ENCODE measurements at regions of chr5 and their contacts with region 1.

Region 1: DNA sequence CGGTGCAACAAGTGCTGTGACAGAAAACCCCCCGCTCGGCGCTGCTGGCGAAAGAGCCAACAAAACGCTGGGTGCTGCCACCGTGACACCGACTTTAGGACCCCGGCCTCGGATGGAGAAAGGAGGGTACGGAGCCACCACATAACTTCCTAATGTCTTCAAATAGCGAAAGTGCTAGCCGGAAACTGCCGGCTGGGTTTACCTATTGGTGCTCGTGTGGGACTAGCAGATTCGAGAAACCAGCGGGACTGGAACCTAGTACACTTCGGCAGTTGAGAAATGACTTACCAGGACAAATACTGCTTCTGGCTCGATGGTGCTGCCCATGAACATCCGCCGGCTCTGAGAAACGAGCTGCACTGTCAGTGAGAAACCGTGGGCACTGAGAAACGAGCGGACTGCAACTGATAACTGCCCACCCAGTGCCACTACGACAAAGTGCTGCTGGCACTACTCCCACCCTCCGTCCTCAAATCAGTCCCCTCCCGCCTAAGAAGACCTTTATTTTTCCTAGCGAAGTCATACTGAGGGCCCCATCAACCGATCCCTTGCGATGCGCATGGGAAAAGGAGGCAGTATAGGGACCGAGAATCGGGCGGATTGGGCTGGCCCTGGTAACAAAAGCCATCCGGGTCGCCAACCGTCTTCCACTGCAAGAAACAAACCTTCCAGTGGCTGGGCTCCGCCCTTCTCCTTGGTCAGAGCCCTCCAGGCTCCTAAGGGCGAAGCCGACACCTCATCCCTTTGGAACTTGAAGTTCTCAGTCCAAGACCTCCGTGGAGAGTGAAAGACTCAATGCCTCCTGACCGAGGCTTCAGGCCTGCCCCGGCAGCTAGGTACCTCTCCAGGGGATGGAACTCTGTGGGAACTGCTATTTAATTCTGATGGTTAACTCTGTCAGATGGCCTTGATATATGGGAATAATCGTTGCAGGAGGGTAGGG is 27.0 kb upstream of the ANXA2R start:
- H3K4me3 Mint-ChIP-seq: peak overlapping the region; percentile 100
- H3K27ac Mint-ChIP-seq: peak overlapping the region; percentile 99
- H3K4me1 Mint-ChIP-seq: peaks cover 49% of the 10 kb centered on the region
- H3K27me3 Mint-ChIP-seq: no peaks in the 10 kb centered on the region

Region 2: GRCh38 chr5:41903892-41904799 is 1162.9 kb before region 1 on chr5 and contains the start of gene RIMOC1:
- intact Hi-C with region 1: loop called (anchors 5 kb)
- H3K4me3 Mint-ChIP-seq: peak within 1 kb of the TSS; percentile 95
- H3K27ac Mint-ChIP-seq: peak within 1 kb of the TSS; percentile 99
- H3K4me1 Mint-ChIP-seq: peaks cover 45% of the 10 kb centered on the region
- H3K27me3 Mint-ChIP-seq: peaks cover 9% of the 10 kb centered on the region

Region 3: GRCh38 chr5:42950440-42951292 is 116.4 kb before region 1 on chr5:
- intact Hi-C with region 1: loop called (anchors 1 kb)
- H3K4me3 Mint-ChIP-seq: peak overlapping the region; percentile 83
- H3K27ac Mint-ChIP-seq: peak overlapping the region; percentile 98
- H3K4me1 Mint-ChIP-seq: peaks cover 35% of the 10 kb centered on the region
- H3K27me3 Mint-ChIP-seq: peaks cover 10% of the 10 kb centered on the region

Region 4: GRCh38 chr5:43008369-43009153 is 58.5 kb before region 1 on chr5:
- intact Hi-C with region 1: loop called (anchors 2 kb)
- H3K4me3 Mint-ChIP-seq: peak overlapping the region; percentile 82
- H3K27ac Mint-ChIP-seq: peak overlapping the region; percentile 98
- H3K4me1 Mint-ChIP-seq: peaks cover 39% of the 10 kb centered on the region
- H3K27me3 Mint-ChIP-seq: no peaks in the 10 kb centered on the region

Region 5: DNA sequence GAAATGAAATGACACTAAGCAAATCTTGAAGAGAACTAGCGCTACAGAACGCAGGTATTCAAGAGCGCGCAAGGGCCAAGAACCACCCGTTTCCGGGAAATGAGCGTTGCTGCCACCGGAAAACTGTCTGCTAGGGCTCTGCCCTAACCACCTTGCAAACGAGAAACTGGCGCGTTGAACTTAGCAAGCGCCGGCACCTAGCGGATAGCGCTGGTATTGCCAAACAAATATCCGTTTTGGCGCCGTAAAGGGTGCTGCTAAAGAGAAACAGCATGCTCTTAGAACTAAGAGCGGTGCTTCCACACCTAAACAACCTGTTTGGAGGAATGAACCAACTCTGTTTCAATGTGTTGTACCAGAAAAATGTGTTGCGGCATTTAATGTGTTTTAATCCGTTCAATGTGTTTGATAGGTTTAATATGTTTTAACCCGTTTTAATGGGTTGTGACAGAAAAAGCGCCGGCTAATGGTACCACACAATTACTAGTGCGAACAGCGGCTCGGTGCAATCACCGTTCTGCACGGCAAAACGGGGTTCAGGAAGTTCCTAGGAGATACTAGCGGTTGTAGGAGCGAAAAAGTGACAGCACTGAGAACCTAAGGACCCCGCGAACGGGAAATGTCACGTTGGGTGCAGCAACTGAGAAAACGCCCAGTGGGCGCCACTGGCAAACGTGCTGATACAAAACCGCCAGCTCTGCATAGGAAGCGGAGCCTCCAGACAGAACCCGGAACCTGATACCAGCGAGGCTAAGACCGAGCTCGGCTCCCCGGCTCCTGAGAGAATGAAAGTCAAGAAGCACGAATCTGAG is 26.6 kb before region 1 on chr5 and contains the start of gene ANXA2R:
- intact Hi-C with region 1: loop called (anchors 1 kb)
- H3K4me3 Mint-ChIP-seq: peak within 1 kb of the TSS; percentile 88
- H3K27ac Mint-ChIP-seq: peak within 1 kb of the TSS; percentile 100
- H3K4me1 Mint-ChIP-seq: peaks cover 43% of the 10 kb centered on the region
- H3K27me3 Mint-ChIP-seq: no peaks in the 10 kb centered on the region

Region 6: DNA sequence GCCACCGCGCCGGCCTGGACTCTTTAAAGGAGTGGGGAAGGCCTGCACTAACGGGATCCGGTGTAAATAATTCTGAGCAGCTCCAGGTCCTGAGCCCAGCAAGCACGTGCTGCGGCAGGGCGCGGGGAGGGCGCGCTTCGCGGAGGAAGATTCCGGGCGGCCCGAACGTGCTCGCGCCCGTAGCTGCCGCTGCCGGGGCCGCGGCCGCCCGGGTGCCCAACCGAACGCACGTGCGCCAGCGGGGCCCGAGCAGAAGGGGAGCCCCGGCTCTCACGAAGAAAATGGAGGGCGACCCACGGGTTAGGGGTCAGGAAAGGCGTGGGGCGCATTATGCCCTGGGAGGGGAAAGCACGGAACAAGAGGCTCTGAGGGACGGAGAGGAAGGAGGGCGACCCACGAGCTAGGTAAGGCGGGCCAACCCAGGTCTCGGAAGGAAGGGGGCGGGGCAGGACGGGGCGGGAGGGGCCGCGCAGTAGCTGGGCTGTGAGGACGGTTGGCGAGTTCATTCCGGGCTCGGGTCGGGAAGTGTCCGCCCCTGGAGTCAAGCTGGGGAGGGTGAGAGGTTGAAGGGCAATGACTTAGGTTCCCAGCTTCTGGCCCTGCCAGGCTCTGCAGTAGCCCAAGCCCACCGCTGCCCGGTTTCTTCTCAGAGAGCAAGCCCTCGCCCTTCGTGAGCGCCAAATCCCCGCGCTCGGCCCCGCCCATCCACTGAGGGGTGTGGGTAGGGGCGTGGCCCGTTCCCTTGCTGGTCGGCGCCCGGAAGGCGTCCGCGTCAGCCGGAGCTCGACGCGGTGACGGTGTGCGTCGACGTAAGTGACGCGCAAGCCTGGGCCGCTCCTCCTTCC is 53.9 kb after region 1 on chr5 and contains the start of gene ZNF131:
- intact Hi-C with region 1: loop called (anchors 1 kb)
- H3K4me3 Mint-ChIP-seq: peak within 1 kb of the TSS; percentile 96
- H3K27ac Mint-ChIP-seq: peak within 1 kb of the TSS; percentile 98
- H3K4me1 Mint-ChIP-seq: peaks cover 27% of the 10 kb centered on the region
- H3K27me3 Mint-ChIP-seq: peaks cover 2% of the 10 kb centered on the region

Region 7: GRCh38 chr5:43256261-43256966 is 189.3 kb after region 1 on chr5:
- intact Hi-C with region 1: no loop called
- H3K4me3 Mint-ChIP-seq: no peak overlapping the region
- H3K27ac Mint-ChIP-seq: no peak overlapping the region
- H3K4me1 Mint-ChIP-seq: no peaks in the 10 kb centered on the region
- H3K27me3 Mint-ChIP-seq: peaks cover 4% of the 10 kb centered on the region